Aorta (tissue), 5 donors: ENCODE measurements at regions of chr2 and their contacts with region 1.

Region 1: GRCh38 chr2:133674433-133675331 is 106.4 kb upstream of the NCKAP5 start:
- DNase-seq: peak in 1 of 2 donors; percentile 50
- ATAC-seq: peak; percentile 24
- H3K4me3 ChIP-seq: peak overlapping the region; percentile 45 to 69
- H3K27ac ChIP-seq: peak overlapping the region in 1 of 2 donors; percentile 36
- H3K4me1 ChIP-seq: peaks cover 7 to 19% of the 10 kb centered on the region in 2 donors
- H3K27me3 ChIP-seq: no peaks in the 10 kb centered on the region

Region 2: GRCh38 chr2:133579274-133579673 is 95.4 kb before region 1 on chr2:
- intact Hi-C with region 1: no loop called
- DNase-seq: no peak
- ATAC-seq: no peak
- H3K4me3 ChIP-seq: no peak overlapping the region
- H3K27ac ChIP-seq: no peak overlapping the region
- H3K4me1 ChIP-seq: no peaks in the 10 kb centered on the region
- H3K27me3 ChIP-seq: peaks cover 0 to 2% of the 10 kb centered on the region in 2 donors

Region 3: DNA sequence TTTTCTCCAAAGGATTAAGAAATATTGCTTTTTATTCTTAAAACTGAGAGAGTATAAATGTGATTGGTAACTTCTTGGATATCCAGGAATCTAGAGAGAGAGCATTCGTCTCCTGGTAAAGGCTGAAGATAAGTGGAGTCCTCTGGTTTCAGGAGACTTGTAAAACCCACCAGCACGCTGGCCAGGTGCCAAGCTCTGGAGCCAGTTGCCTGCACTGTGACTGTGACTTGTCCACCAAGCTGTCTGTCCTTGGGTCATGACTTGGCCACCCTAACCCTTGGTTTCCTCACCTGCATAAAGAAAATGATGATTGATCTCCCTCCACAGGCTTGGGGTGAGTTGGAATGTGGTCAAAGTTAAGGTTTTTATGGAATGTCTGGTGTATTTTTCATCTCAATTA is 79.0 kb after region 1 on chr2:
- intact Hi-C with region 1: loop called in 1 of 2 experiments (anchors 5 kb)
- DNase-seq: no peak
- ATAC-seq: no peak
- H3K4me3 ChIP-seq: no peak overlapping the region
- H3K27ac ChIP-seq: no peak overlapping the region
- H3K4me1 ChIP-seq: peaks cover 0 to 6% of the 10 kb centered on the region in 2 donors
- H3K27me3 ChIP-seq: no peaks in the 10 kb centered on the region

Region 4: GRCh38 chr2:133774654-133775015 is 100.0 kb after region 1 on chr2:
- intact Hi-C with region 1: loop called in 1 of 2 experiments (anchors 5 kb)
- DNase-seq: peak; percentile 67 to 85
- ATAC-seq: peak; percentile 37
- H3K4me3 ChIP-seq: no peak overlapping the region
- H3K27ac ChIP-seq: no peak overlapping the region
- H3K4me1 ChIP-seq: peaks cover 0 to 3% of the 10 kb centered on the region in 2 donors
- H3K27me3 ChIP-seq: peaks cover 0 to 2% of the 10 kb centered on the region in 2 donors

Region 5: GRCh38 chr2:133953524-133953923 is 278.8 kb after region 1 on chr2:
- intact Hi-C with region 1: no loop called
- DNase-seq: no peak
- ATAC-seq: no peak
- H3K4me3 ChIP-seq: no peak overlapping the region
- H3K27ac ChIP-seq: no peak overlapping the region
- H3K4me1 ChIP-seq: no peaks in the 10 kb centered on the region
- H3K27me3 ChIP-seq: no peaks in the 10 kb centered on the region